Endothelial cell of umbilical vein (primary cell): ENCODE measurements at regions of chr3 and their contacts with region 1.

Region 1: DNA sequence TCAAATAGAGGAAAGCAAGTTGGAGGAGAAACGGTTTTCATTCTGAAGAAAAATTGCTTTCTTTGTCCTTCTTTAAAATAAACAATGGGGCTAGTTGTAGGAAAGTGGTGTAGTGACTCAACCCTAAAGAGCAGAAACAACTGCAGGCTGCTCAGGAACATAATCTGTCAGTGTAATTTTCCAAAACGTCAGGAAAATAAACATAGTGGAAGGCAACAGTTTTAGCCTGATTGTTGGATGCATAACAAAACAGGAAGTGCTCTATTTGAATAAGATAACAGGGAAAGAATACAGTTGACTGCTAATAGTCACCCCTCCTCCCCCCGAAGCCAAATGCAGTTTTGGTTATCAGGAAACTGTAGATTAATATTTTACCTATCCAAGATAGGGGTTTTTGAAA is 167.6 kb downstream of the ECT2 start:
- DNase-seq: peak; percentile 96
- H3K4me3 ChIP-seq: no peak overlapping the region
- H3K27ac ChIP-seq: peak overlapping the region; percentile 83
- H3K4me1 ChIP-seq: peaks cover 49% of the 10 kb centered on the region
- H3K27me3 ChIP-seq: no peaks in the 10 kb centered on the region
- CTCF ChIP-seq: no peak
- POLR2A ChIP-seq: peak; percentile 49

Region 2: GRCh38 chr3:172848910-172849309 is 69.3 kb before region 1 on chr3:
- CTCF ChIA-PET with region 1: interaction called, 9 read pairs
- POLR2A ChIA-PET with region 1: no interaction called
- dilution Hi-C with region 1: no loop called
- intact Hi-C with region 1: loop called (anchors 2 kb)
- DNase-seq: peak; percentile 63
- H3K4me3 ChIP-seq: no peak overlapping the region
- H3K27ac ChIP-seq: no peak overlapping the region
- H3K4me1 ChIP-seq: peaks cover 16% of the 10 kb centered on the region
- H3K27me3 ChIP-seq: no peaks in the 10 kb centered on the region
- CTCF ChIP-seq: no peak
- POLR2A ChIP-seq: no peak

Region 3: DNA sequence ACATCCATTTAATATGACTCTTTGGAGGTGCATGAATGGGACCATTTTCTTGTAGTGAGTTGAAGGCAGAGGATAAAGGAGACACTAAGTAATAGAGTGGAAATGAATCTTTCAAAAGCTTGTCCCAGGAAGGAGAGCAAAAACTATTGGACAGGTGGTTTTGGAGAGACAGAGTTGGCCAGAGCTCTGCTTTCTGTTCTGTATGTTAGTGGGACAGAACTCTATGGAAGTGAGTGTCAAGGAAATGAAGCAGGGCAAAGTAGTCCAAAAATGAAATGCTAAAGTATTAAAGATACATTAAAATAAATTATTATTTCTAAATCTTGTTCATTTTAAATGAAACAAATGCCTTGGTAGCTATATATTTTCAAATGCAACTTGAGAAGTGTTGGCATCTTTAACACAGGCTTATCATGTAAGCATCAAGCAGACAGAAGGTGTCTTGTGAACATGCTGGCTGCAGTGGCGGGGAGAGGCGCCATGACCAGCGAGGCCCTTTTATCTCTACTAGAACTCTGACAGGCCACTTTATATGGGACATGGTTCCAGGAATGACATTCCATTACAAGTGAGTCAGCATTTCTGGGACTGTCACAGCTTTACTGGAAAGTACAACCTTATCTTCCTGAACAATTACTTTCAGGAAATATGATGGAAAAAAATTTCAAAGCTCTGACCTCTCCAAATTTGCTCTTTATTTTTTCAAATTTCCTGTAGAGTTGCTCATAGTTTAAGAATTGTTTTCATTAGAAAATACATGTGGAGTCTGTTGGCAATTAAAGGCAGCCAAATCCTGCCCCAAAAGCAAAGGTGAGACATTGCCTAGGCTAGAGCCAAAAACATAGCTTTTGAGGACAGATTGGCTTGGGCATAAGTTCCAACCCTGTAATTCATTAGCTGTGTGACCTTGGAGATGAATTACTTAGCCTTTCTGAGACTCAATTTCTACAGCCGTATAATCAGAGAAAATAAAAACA is 61.1 kb before region 1 on chr3:
- CTCF ChIA-PET with region 1: interaction called, 3 read pairs
- POLR2A ChIA-PET with region 1: no interaction called
- dilution Hi-C with region 1: no loop called
- intact Hi-C with region 1: loop called (anchors 1 kb)
- DNase-seq: peak; percentile 88
- H3K4me3 ChIP-seq: no peak overlapping the region
- H3K27ac ChIP-seq: peak overlapping the region; percentile 46
- H3K4me1 ChIP-seq: peaks cover 45% of the 10 kb centered on the region
- H3K27me3 ChIP-seq: no peaks in the 10 kb centered on the region
- CTCF ChIP-seq: no peak
- POLR2A ChIP-seq: no peak

Region 4: GRCh38 chr3:172869368-172869771 is 48.8 kb before region 1 on chr3:
- CTCF ChIA-PET with region 1: no interaction called
- POLR2A ChIA-PET with region 1: no interaction called
- dilution Hi-C with region 1: no loop called
- intact Hi-C with region 1: loop called (anchors 2 kb)
- DNase-seq: no peak
- H3K4me3 ChIP-seq: no peak overlapping the region
- H3K27ac ChIP-seq: peak overlapping the region; percentile 19
- H3K4me1 ChIP-seq: peaks cover 26% of the 10 kb centered on the region
- H3K27me3 ChIP-seq: no peaks in the 10 kb centered on the region
- CTCF ChIP-seq: no peak
- POLR2A ChIP-seq: no peak

Region 5: DNA sequence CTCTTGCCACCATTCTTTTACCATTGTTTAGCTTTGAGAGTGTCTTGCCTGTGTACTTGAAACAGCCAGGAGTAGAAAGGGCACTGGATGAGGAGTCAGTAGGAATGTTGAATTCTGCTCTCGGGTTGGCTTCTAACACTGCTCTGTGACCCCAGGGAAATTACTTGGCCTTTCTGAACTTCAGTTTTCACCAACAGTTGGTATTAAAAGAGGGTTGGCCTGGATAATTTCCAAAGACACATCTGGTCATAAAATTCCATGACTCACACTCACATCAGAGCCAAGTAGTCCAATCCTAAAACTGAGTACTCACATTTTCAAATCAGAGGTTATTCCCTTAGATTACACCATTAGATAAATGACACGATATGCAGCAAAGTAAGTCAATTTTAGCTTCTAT is 26.0 kb before region 1 on chr3:
- CTCF ChIA-PET with region 1: no interaction called
- POLR2A ChIA-PET with region 1: no interaction called
- dilution Hi-C with region 1: no loop called
- intact Hi-C with region 1: loop called (anchors 1 kb)
- DNase-seq: peak; percentile 72
- H3K4me3 ChIP-seq: no peak overlapping the region
- H3K27ac ChIP-seq: no peak overlapping the region
- H3K4me1 ChIP-seq: peaks cover 12% of the 10 kb centered on the region
- H3K27me3 ChIP-seq: no peaks in the 10 kb centered on the region
- CTCF ChIP-seq: no peak
- POLR2A ChIP-seq: no peak

Region 6: DNA sequence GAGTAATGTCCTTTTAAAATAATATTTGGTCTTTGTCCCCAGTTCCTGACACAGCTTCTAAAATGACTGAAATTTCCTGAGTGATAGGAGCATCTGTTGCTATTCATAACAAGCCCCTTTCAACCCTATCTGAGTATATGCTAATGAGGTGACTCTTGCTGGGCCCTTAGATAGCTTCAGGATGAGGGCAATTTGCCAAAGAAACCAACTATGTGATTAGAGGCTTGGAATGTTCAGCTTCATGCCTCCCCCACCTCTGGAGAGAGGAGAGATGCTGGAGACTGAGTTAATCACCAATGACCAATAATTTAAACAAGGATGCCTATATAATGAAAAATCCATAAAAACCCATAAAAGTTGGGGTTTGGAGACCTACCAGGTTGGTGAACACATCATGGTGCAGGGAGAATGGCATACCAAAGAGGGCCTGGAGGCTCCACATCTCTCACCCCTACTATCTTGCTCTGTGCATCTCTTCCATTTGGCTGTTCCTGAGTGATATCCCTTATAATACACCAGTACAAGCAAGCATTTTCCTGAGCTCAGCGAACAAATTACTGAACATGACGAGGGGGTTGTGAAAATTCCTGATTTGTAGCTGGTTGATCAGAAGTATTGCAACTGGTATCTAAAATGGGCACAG is 21.6 kb after region 1 on chr3:
- CTCF ChIA-PET with region 1: no interaction called
- POLR2A ChIA-PET with region 1: interaction called, 3 read pairs
- dilution Hi-C with region 1: no loop called
- intact Hi-C with region 1: loop called (anchors 1 kb)
- DNase-seq: peak; percentile 77
- H3K4me3 ChIP-seq: no peak overlapping the region
- H3K27ac ChIP-seq: peak overlapping the region; percentile 84
- H3K4me1 ChIP-seq: peaks cover 21% of the 10 kb centered on the region
- H3K27me3 ChIP-seq: no peaks in the 10 kb centered on the region
- CTCF ChIP-seq: no peak
- POLR2A ChIP-seq: no peak

Region 7: GRCh38 chr3:173045770-173046382 is 127.7 kb after region 1 on chr3:
- CTCF ChIA-PET with region 1: interaction called, 4 read pairs
- POLR2A ChIA-PET with region 1: no interaction called
- dilution Hi-C with region 1: no loop called
- intact Hi-C with region 1: loop called (anchors 5 kb)
- DNase-seq: peak; percentile 35
- H3K4me3 ChIP-seq: no peak overlapping the region
- H3K27ac ChIP-seq: no peak overlapping the region
- H3K4me1 ChIP-seq: no peaks in the 10 kb centered on the region
- H3K27me3 ChIP-seq: no peaks in the 10 kb centered on the region
- CTCF ChIP-seq: peak in 1 of 2 donors; percentile 4
- POLR2A ChIP-seq: no peak

Region 8: GRCh38 chr3:174457758-174458157 is 1539.6 kb after region 1 on chr3:
- CTCF ChIA-PET with region 1: no interaction called
- POLR2A ChIA-PET with region 1: no interaction called
- dilution Hi-C with region 1: no loop called
- intact Hi-C with region 1: no loop called
- DNase-seq: no peak
- H3K4me3 ChIP-seq: no peak overlapping the region
- H3K27ac ChIP-seq: no peak overlapping the region
- H3K4me1 ChIP-seq: no peaks in the 10 kb centered on the region
- H3K27me3 ChIP-seq: no peaks in the 10 kb centered on the region
- CTCF ChIP-seq: no peak
- POLR2A ChIP-seq: no peak